Activated CD4-positive, alpha-beta T cell treated with anti-CD3 and anti-CD28 coated beads for 36 hours (primary cell): ENCODE measurements at regions of chr14 and their contacts with region 1.

Region 1: GRCh38 chr14:105020815-105021655 is at the start of gene CDCA4:
- DNase-seq: peak; percentile 99
- ATAC-seq: peak; percentile 82
- H3K4me3 Mint-ChIP-seq: peak within 1 kb of the TSS; percentile 94
- H3K27ac Mint-ChIP-seq: peak within 1 kb of the TSS; percentile 93
- H3K4me1 Mint-ChIP-seq: peaks cover 72% of the 10 kb centered on the region
- H3K27me3 Mint-ChIP-seq: no peaks in the 10 kb centered on the region
- total RNA-seq, gene CDCA4: 52.0 to 62.7 TPM

Region 2: GRCh38 chr14:103847451-103848188 is 1173.4 kb before region 1 on chr14 and contains the start of gene PPP1R13B:
- CTCF ChIA-PET with region 1: no interaction called
- POLR2A ChIA-PET with region 1: no interaction called
- intact Hi-C with region 1: loop called in 1 of 2 experiments (anchors 10 kb)
- DNase-seq: peak; percentile 97
- ATAC-seq: peak; percentile 98
- H3K4me3 Mint-ChIP-seq: peak within 1 kb of the TSS; percentile 76
- H3K27ac Mint-ChIP-seq: peak within 1 kb of the TSS; percentile 38
- H3K4me1 Mint-ChIP-seq: peaks cover 16% of the 10 kb centered on the region
- H3K27me3 Mint-ChIP-seq: peaks cover 5% of the 10 kb centered on the region
- total RNA-seq, gene PPP1R13B: 9.3 to 10.3 TPM

Region 3: DNA sequence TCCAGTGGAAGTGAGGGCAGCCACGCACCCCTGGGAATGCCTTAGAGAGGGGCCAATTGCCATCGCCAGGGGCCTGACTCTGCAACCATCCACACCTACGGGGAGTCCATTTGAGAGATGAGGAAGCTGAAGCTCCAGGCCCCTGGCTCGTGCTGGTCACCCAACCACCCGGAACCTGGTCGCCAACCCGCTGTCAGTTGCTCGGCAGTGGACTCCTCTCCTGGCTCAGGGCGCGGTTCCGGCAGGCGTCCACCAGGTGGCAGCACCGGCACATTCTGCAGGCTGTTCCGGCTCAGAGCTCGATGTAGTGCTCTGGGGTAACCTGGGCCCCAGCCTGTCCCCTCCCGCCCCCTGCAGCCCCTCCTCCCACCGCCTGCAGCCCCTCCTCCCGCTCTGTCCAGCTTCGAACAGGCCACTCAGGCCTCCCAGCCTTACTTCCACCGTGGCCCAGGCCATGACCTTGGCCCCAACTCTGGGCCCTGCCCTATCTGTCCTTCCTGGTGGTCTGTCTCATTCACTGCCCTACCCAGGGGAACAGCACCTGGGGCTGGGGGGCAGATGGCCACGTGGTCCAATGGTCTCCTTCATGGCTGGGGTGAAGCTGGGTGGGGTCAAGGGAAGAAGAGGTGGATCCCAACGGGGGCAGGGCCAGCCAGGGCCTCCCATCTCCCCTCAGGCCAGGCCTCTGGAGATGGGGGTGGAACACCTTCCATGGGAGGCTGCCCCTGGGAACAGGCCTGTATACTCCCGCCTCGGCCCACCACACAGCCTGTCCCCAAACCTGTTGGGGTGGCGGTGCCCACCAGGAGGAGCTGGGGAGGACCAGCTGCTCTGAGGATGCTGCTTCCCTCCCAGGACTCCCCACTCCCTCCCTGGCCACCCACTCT is 252.4 kb before region 1 on chr14:
- CTCF ChIA-PET with region 1: no interaction called
- POLR2A ChIA-PET with region 1: no interaction called
- intact Hi-C with region 1: no loop called
- DNase-seq: peak; percentile 96
- ATAC-seq: peak; percentile 95
- H3K4me3 Mint-ChIP-seq: no peak overlapping the region
- H3K27ac Mint-ChIP-seq: no peak overlapping the region
- H3K4me1 Mint-ChIP-seq: peaks cover 8% of the 10 kb centered on the region
- H3K27me3 Mint-ChIP-seq: no peaks in the 10 kb centered on the region

Region 4: DNA sequence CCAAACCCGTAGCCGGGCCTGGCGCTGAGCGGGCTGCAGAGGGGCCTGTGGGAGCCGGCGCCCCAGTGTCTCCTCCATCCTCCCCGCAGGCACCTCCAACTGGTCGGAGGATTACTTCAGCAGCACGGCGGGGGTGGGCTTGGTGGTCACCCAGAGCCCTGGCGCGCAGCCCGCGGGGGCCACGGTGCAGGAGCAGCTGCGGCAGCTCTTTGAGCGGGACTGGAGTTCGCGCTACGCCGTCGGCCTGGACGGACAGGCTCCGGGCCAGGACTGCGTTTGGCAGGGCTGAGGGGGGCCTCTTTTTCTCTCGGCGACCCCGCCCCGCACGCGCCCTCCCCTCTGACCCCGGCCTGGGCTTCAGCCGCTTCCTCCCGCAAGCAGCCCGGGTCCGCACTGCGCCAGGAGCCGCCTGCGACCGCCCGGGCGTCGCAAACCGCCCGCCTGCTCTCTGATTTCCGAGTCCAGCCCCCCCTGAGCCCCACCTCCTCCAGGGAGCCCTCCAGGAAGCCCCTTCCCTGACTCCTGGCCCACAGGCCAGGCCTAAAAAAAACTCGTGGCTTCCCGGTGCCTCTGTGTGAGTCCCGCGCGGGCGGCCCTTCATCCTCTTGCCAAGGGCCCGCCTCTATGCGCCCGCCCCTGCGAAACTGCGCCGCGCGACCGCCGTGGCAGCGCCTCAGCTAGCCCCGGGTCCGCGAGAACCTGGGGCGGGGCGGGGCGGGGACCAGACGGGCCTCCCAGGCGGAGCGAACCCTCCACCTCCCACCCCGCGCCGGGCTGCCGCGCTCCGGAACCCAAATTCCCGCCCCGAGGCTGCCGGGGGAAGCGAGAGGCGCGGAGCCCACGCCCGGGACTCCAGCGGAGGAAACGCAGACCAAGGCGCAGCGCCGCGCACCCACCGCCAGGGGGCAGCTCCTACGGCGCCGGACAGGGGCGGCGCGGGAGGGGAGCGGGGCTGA is 88.1 kb before region 1 on chr14:
- CTCF ChIA-PET with region 1: interaction called, 3 read pairs
- POLR2A ChIA-PET with region 1: no interaction called
- intact Hi-C with region 1: loop called in 1 of 2 experiments (anchors 1 kb)
- DNase-seq: peak; percentile 93
- ATAC-seq: peak; percentile 96
- H3K4me3 Mint-ChIP-seq: peak overlapping the region; percentile 32
- H3K27ac Mint-ChIP-seq: no peak overlapping the region
- H3K4me1 Mint-ChIP-seq: no peaks in the 10 kb centered on the region
- H3K27me3 Mint-ChIP-seq: peaks cover 8% of the 10 kb centered on the region

Region 5: DNA sequence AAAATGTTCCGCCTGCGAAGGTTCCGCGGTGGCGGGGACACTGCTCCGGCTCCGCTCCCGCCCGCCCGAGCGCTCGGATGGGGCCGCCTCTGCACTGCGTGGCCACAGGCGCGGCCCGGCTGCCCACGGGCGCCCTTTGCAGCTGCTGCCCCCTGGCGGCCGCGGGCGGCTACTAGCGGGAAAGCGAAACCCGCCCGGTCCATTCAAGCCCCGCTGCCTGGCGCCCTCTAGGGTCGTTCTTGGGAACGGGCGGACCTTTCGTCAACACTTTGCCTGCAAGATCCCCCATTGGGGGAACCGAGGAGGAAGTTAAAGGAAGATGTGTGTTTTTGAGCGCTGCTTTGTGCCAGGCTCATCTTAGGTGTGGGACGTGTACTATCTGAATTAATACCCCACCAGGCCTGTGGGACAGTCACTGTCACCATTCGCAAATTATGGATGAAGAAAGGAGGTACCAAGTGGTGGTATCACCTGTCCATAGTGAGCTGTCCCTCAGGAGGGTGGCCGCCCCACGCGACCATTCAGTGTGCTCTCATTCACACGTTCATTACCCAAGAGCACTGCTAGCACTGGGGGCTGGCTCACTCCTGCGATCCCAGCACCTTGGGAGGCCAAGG is 24.8 kb after region 1 on chr14:
- CTCF ChIA-PET with region 1: interaction called, 32 read pairs
- POLR2A ChIA-PET with region 1: interaction called, 3 read pairs
- intact Hi-C with region 1: loop called (anchors 1 kb)
- DNase-seq: peak; percentile 96
- ATAC-seq: peak; percentile 89
- H3K4me3 Mint-ChIP-seq: no peak overlapping the region
- H3K27ac Mint-ChIP-seq: peak overlapping the region; percentile 25
- H3K4me1 Mint-ChIP-seq: peaks cover 14% of the 10 kb centered on the region
- H3K27me3 Mint-ChIP-seq: peaks cover 9% of the 10 kb centered on the region

Region 6: GRCh38 chr14:105093431-105094192 is 72.6 kb after region 1 on chr14:
- CTCF ChIA-PET with region 1: interaction called, 3 read pairs
- POLR2A ChIA-PET with region 1: no interaction called
- intact Hi-C with region 1: loop called in 1 of 2 experiments (anchors 2 kb)
- DNase-seq: peak; percentile 88
- ATAC-seq: peak; percentile 71
- H3K4me3 Mint-ChIP-seq: peak overlapping the region; percentile 65
- H3K27ac Mint-ChIP-seq: peak overlapping the region; percentile 31
- H3K4me1 Mint-ChIP-seq: peaks cover 5% of the 10 kb centered on the region
- H3K27me3 Mint-ChIP-seq: no peaks in the 10 kb centered on the region

Region 7: GRCh38 chr14:105138021-105138541 is 117.0 kb after region 1 on chr14:
- CTCF ChIA-PET with region 1: no interaction called
- POLR2A ChIA-PET with region 1: no interaction called
- intact Hi-C with region 1: no loop called
- DNase-seq: no peak
- ATAC-seq: no peak
- H3K4me3 Mint-ChIP-seq: no peak overlapping the region
- H3K27ac Mint-ChIP-seq: no peak overlapping the region
- H3K4me1 Mint-ChIP-seq: no peaks in the 10 kb centered on the region
- H3K27me3 Mint-ChIP-seq: peaks cover 5% of the 10 kb centered on the region

Region 8: GRCh38 chr14:105247715-105248367 is 226.8 kb after region 1 on chr14:
- CTCF ChIA-PET with region 1: no interaction called
- POLR2A ChIA-PET with region 1: no interaction called
- intact Hi-C with region 1: no loop called
- DNase-seq: no peak
- ATAC-seq: no peak
- H3K4me3 Mint-ChIP-seq: peak overlapping the region; percentile 74
- H3K27ac Mint-ChIP-seq: no peak overlapping the region
- H3K4me1 Mint-ChIP-seq: peaks cover 15% of the 10 kb centered on the region
- H3K27me3 Mint-ChIP-seq: no peaks in the 10 kb centered on the region

Region 9: DNA sequence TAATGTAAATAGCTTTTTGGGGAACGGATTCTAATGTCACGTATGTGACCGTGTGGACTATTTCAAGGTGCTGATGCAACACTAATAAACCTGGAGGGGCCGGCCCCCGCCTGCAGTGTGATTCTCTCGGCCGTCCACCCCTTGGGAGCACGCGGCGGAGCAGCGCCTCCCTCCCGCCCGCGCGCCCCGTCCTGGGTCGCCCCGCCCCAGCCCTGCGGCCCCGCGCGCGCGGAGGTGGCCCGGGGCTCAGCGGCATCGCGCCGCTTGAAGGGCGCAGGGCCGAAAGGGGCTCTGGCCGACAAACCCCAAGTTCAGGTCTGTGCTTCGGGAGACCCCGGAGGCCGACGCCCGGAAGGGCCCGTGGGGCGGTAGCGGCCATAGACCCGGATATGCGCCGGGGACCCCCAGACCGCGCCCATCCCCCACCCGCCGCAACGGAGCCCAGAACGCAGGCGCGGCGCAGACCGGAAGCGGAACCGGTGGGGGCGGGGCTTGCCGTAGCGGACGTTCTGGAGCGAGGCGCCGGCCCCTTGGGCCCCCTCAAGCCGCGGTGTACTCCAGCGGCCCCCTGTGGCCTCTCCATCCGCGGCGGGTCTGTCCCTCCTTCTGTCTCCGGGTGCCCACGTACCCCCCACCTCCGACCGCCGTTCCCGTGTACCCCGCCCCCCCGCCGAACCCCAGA is 377.1 kb after region 1 on chr14 and contains the start of gene TEX22:
- CTCF ChIA-PET with region 1: no interaction called
- POLR2A ChIA-PET with region 1: no interaction called
- intact Hi-C with region 1: loop called in 1 of 2 experiments (anchors 1 kb)
- DNase-seq: peak; percentile 94
- ATAC-seq: peak; percentile 86
- H3K4me3 Mint-ChIP-seq: peak within 1 kb of the TSS; percentile 85
- H3K27ac Mint-ChIP-seq: peak within 1 kb of the TSS; percentile 91
- H3K4me1 Mint-ChIP-seq: peaks cover 11% of the 10 kb centered on the region
- H3K27me3 Mint-ChIP-seq: no peaks in the 10 kb centered on the region
- total RNA-seq, gene TEX22: 1.4 to 2.4 TPM